ENCODE measurements at regions of chr13 and their contacts with region 1.

Region 1: GRCh38 chr13:84844473-84844872 is 954.7 kb downstream of the SLITRK6 start:
- DNase-seq: no peak
- ATAC-seq: peak; percentile 72
- H3K4me3 ChIP-seq: no peak overlapping the region
- H3K27ac ChIP-seq: no peak overlapping the region
- H3K4me1 ChIP-seq: no peaks in the 10 kb centered on the region
- H3K27me3 ChIP-seq: no peaks in the 10 kb centered on the region
- CTCF ChIP-seq: peak in 2 of 3 experiments; percentile 13 to 35; a peak in 2 of 6 replicates
- EP300 ChIP-seq: no peak
- POLR2A ChIP-seq: no peak
- RAD21 ChIP-seq: peak; percentile 21; the same call in 1 of the 2 replicates

Region 2: DNA sequence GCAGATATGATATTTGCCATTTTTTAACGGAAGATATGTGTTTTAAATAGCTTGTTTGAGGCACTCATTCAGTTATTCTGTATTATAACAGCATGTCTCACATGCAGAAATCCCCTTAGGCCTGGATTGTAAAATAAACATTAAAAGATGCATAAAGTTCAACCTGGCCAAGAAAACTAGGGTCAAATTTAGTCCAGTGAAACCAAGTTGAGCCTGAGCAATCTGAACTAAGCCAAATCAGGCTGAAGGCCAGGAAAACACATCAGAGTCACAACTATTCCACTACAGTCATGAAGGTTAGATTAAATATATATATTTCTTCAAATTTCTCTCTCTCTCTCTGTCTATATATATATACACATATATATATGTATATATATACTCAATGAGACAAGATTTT is 1467.0 kb before region 1 on chr13:
- CTCF ChIA-PET with region 1: no interaction called
- POLR2A ChIA-PET with region 1: no interaction called
- RAD21 ChIA-PET with region 1: no interaction called
- SMC1A ChIA-PET with region 1: no interaction called
- in situ Hi-C with region 1: no loop called
- intact Hi-C with region 1: no loop called
- DNase-seq: no peak
- ATAC-seq: no peak
- H3K4me3 ChIP-seq: no peak overlapping the region
- H3K27ac ChIP-seq: no peak overlapping the region
- H3K4me1 ChIP-seq: no peaks in the 10 kb centered on the region
- H3K27me3 ChIP-seq: no peaks in the 10 kb centered on the region
- CTCF ChIP-seq: no peak
- EP300 ChIP-seq: no peak
- POLR2A ChIP-seq: no peak
- RAD21 ChIP-seq: no peak

Region 3: GRCh38 chr13:84865783-84866221 is 21.3 kb after region 1 on chr13:
- CTCF ChIA-PET with region 1: interaction called, 15 read pairs
- POLR2A ChIA-PET with region 1: no interaction called
- RAD21 ChIA-PET with region 1: interaction called, 4 read pairs
- SMC1A ChIA-PET with region 1: interaction called, 5 read pairs
- in situ Hi-C with region 1: no loop called
- intact Hi-C with region 1: no loop called
- DNase-seq: no peak
- ATAC-seq: peak; percentile 62
- H3K4me3 ChIP-seq: no peak overlapping the region
- H3K27ac ChIP-seq: no peak overlapping the region
- H3K4me1 ChIP-seq: no peaks in the 10 kb centered on the region
- H3K27me3 ChIP-seq: no peaks in the 10 kb centered on the region
- CTCF ChIP-seq: no peak
- EP300 ChIP-seq: no peak
- POLR2A ChIP-seq: no peak
- RAD21 ChIP-seq: no peak